ENCODE measurements at regions of chr3 and their contacts with region 1.

Region 1: GRCh38 chr3:141561426-141562034 is 74.7 kb downstream of the RASA2 start:
- DNase-seq: peak; percentile 48
- ATAC-seq: no peak
- H3K4me3 Mint-ChIP-seq: no peak overlapping the region
- H3K27ac Mint-ChIP-seq: peak overlapping the region; percentile 52
- H3K4me1 Mint-ChIP-seq: peaks cover 21% of the 10 kb centered on the region
- H3K27me3 Mint-ChIP-seq: no peaks in the 10 kb centered on the region

Region 2: DNA sequence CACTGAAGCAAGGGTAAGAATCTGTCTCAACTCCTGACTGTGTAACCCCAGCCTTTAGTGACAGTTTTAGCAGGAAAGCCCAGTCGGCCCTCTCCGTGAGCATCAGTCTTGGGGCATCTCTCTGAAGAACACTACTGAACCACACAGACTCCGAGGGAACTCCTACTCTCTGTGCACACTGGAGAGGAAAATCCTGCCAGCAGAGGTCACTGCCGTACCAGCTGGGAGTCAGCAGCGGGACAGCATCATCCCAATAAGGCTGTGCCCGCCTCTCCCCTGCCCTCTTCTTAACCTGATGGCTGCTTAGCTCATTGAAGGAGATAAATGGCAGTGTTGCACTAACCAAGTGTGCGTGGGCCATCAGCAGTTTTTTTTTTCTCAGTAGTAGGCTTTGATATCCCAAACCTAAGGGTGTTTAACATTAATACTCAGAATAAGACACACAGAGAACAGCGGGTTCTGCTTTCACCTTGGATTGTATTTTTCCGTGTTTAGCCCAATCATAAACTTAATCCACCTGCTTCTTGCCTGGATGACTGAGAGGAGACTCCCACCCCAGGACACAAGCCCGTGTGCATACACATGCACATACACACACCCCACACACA is 101.3 kb before region 1 on chr3:
- CTCF ChIA-PET with region 1: interaction called, 116 read pairs
- DNase-seq: peak; percentile 93
- ATAC-seq: peak; percentile 99
- H3K4me3 Mint-ChIP-seq: no peak overlapping the region
- H3K27ac Mint-ChIP-seq: no peak overlapping the region
- H3K4me1 Mint-ChIP-seq: peaks cover 20% of the 10 kb centered on the region
- H3K27me3 Mint-ChIP-seq: no peaks in the 10 kb centered on the region

Region 3: DNA sequence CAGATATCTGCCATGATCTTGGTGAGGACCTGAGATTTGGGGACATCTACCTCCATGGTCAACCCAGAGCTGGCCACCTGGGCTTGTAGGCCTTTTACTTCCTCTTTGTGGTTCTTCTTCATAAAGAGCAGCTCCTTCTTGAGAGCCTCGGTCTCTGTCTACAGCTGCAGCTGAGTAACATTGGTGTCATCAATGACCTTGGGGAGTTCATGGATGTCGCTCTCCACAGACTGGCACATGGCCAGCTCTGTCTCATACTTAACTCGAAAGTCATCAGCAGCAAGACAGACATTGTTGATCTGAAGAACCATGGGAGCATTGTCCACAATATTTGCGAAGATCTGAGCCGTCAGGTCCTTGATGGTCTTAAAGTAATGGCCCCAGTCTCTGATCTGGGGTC is 90.4 kb before region 1 on chr3:
- CTCF ChIA-PET with region 1: interaction called, 61 read pairs
- DNase-seq: no peak
- ATAC-seq: no peak
- H3K4me3 Mint-ChIP-seq: no peak overlapping the region
- H3K27ac Mint-ChIP-seq: no peak overlapping the region
- H3K4me1 Mint-ChIP-seq: peaks cover 18% of the 10 kb centered on the region
- H3K27me3 Mint-ChIP-seq: peaks cover 2% of the 10 kb centered on the region

Region 4: DNA sequence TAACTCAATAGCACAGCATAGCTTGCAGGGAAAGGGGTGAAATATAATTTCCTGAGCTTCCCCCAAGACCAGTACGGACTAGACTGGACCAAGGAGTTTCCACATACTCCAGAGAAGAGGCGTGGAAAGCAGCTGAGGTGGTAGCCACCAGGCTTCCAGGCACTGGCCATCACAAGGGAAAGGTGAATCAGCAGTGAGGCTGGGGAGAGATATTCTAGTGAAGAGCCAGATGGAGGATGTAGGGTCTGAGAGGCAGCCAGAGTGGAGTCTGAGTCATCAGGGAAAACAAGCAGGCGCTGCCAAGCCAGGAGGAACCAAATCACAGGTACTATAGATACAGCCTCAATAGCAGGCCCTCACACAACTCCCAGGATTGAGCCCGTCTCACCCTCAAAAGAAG is 84.3 kb before region 1 on chr3:
- CTCF ChIA-PET with region 1: interaction called, 61 read pairs
- DNase-seq: no peak
- ATAC-seq: no peak
- H3K4me3 Mint-ChIP-seq: no peak overlapping the region
- H3K27ac Mint-ChIP-seq: no peak overlapping the region
- H3K4me1 Mint-ChIP-seq: peaks cover 31% of the 10 kb centered on the region
- H3K27me3 Mint-ChIP-seq: peaks cover 14% of the 10 kb centered on the region

Region 5: DNA sequence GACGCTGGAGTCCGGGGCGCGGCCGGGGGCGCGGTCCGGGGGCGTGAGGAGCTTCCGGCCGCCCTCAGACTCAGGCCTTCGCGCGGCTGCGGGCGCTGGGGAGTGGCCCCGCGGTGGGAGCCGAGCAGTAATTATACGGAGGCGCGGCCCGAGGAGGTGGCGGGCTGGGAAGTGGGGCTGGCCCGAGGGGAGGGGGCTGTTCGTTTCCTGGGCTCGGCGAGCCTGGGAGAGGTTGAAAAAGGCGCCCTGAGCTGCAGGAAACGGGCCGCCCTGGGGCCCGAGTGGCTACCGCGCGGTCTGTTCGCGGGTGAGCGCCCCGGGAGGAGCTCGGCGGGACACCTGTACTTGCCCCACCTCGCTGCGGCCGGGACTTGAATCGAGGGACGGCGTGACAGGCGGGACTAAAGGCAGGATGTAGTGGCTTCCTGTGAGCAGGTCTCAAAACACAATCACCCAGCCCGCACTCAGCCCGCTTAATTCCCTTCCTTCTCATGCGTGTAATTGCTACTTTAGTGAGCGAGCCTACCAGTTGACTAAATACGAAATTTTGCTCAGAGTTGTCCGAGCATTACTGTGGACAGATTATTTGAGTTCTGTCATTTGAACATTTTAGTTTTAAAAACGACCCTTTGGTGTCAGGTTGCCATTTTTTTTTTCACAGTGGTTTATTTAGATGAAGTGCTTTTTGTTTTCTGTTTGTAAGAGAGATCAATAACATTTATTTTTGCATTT is 73.8 kb before region 1 on chr3:
- CTCF ChIA-PET with region 1: interaction called, 19 read pairs
- DNase-seq: peak; percentile 97
- ATAC-seq: peak; percentile 73
- H3K4me3 Mint-ChIP-seq: peak overlapping the region; percentile 83
- H3K27ac Mint-ChIP-seq: peak overlapping the region; percentile 98
- H3K4me1 Mint-ChIP-seq: peaks cover 65% of the 10 kb centered on the region
- H3K27me3 Mint-ChIP-seq: peaks cover 2% of the 10 kb centered on the region

Region 6: DNA sequence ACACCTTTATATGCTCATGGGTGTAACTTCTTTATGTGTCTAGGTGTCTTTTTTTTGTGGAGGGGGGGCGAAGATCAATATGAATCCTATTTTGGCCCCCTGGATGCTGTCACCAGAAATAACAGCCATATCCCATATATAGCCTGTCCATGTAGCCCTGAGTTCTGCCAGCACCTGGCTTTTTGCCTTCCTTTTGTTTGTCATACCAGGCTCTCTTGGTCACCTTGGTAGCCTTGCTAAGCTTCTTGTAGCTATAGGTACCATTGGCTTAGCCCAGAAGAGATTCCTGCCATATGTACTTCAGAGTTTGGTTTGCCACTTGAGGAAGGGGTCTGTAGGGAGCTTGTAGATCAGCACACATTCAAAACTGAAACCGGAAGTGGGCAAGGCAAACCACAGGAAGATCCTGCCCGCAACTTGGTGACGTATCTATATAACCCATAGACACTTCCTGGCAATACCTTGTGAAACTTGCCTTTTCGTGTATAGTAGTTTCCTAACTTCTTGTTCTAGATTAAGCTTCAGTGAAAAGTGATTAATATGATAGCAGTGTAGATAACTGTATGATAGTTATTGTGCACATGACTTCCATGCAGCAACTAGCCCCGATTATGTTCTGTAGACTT is 62.8 kb before region 1 on chr3:
- CTCF ChIA-PET with region 1: interaction called, 13 read pairs
- DNase-seq: peak; percentile 97
- ATAC-seq: peak; percentile 88
- H3K4me3 Mint-ChIP-seq: peak overlapping the region; percentile 67
- H3K27ac Mint-ChIP-seq: peak overlapping the region; percentile 94
- H3K4me1 Mint-ChIP-seq: peaks cover 65% of the 10 kb centered on the region
- H3K27me3 Mint-ChIP-seq: no peaks in the 10 kb centered on the region

Measured in activated CD8-positive, alpha-beta memory T cell treated with anti-CD3 and anti-CD28 coated beads, Interleukin-2, amount 10 ng/mL, durations not matched to agents 7 days and 5 days (primary cell).